Mammary epithelial cell (primary cell): ENCODE measurements at regions of chr14 and their contacts with region 1.

Region 1: GRCh38 chr14:71166180-71166790 is 259.0 kb downstream of the PCNX1 start:
- DNase-seq: peak; percentile 77
- H3K4me3 ChIP-seq: no peak overlapping the region
- H3K27ac ChIP-seq: no peak overlapping the region
- H3K4me1 ChIP-seq: peaks cover 8% of the 10 kb centered on the region
- H3K27me3 ChIP-seq: no peaks in the 10 kb centered on the region
- CTCF ChIP-seq: peak; percentile 50 to 76

Region 2: DNA sequence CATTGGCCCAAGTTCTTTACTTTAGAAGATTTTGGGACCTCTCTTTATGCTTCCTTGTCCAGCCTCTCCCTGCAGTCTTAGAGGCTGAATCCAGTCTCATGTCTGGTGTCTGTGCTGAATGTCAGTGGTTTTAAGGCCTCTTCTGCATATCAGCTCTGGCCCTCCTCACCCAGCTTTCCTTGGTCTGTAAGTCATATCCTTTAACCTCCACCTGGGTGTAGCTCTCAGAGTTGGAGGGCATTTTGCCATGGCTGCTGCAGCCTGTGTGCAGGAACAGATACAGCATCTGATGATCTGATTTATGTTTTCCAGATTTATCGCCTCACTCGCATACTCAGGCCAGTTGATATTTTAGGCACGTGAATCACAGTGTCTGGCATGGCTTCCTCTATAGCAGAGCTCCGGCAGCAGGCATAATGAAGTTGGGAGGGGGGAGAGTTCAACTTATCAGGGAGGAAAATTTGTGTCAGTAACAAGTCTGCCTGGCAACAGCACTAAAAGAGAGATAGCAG is 76.0 kb after region 1 on chr14:
- CTCF ChIA-PET with region 1: no interaction called
- dilution Hi-C with region 1: no loop called
- in situ Hi-C with region 1: no loop called
- intact Hi-C with region 1: loop called (anchors 5 kb)
- DNase-seq: no peak
- H3K4me3 ChIP-seq: no peak overlapping the region
- H3K27ac ChIP-seq: no peak overlapping the region
- H3K4me1 ChIP-seq: peaks cover 7% of the 10 kb centered on the region
- H3K27me3 ChIP-seq: no peaks in the 10 kb centered on the region
- CTCF ChIP-seq: no peak

Region 3: GRCh38 chr14:71261206-71261605 is 94.9 kb after region 1 on chr14:
- CTCF ChIA-PET with region 1: no interaction called
- dilution Hi-C with region 1: no loop called
- in situ Hi-C with region 1: no loop called
- intact Hi-C with region 1: no loop called
- DNase-seq: no peak
- H3K4me3 ChIP-seq: no peak overlapping the region
- H3K27ac ChIP-seq: no peak overlapping the region
- H3K4me1 ChIP-seq: no peaks in the 10 kb centered on the region
- H3K27me3 ChIP-seq: no peaks in the 10 kb centered on the region
- CTCF ChIP-seq: no peak

Region 4: GRCh38 chr14:71271166-71271945 is 105.1 kb after region 1 on chr14:
- CTCF ChIA-PET with region 1: no interaction called
- dilution Hi-C with region 1: loop called (anchors 5 kb)
- in situ Hi-C with region 1: no loop called
- intact Hi-C with region 1: no loop called
- DNase-seq: no peak
- H3K4me3 ChIP-seq: no peak overlapping the region
- H3K27ac ChIP-seq: no peak overlapping the region
- H3K4me1 ChIP-seq: peaks cover 5% of the 10 kb centered on the region
- H3K27me3 ChIP-seq: no peaks in the 10 kb centered on the region
- CTCF ChIP-seq: no peak

Region 5: DNA sequence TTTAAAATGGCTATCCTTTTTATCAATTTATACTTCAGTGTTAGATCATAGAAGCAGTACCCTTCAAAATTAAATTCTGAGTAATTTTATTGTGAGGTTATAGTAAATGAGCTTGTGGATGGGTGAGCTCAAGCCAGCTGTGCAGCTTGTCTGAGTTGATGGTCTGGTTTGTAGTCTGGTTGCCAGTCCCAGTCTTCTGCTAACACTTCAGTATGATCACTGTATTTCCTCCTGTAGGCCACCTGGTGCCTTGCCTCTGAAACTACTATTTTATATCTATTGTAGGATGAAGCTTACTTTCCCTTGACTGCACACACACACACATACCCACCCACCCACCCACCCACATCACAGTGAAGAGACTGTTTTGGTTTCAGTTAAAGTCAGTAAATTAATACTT is 237.4 kb after region 1 on chr14:
- CTCF ChIA-PET with region 1: no interaction called
- dilution Hi-C with region 1: no loop called
- in situ Hi-C with region 1: no loop called
- intact Hi-C with region 1: loop called (anchors 2 kb)
- DNase-seq: peak; percentile 23
- H3K4me3 ChIP-seq: no peak overlapping the region
- H3K27ac ChIP-seq: no peak overlapping the region
- H3K4me1 ChIP-seq: peaks cover 13% of the 10 kb centered on the region
- H3K27me3 ChIP-seq: no peaks in the 10 kb centered on the region
- CTCF ChIP-seq: peak in 1 of 2 donors; percentile 37

Region 6: DNA sequence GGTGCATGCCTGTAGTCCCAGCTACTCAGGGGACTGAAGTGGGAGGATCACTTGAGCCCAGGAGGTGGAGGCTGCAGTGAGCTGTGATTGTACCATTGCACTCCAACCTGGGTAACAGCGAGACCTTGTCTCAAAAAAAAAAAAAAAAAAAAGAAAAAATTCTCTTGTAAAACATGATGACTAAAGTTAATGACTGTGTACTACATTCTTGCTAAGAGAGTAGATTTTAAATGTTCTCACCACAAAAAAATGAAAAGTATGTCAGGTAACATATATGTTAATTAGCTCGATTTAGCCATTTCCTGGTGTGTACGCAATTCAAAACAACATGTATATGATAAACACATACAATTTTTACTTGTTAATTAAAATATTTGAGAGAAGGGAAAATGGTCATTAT is 285.2 kb after region 1 on chr14:
- CTCF ChIA-PET with region 1: interaction called, 20 read pairs
- dilution Hi-C with region 1: no loop called
- in situ Hi-C with region 1: no loop called
- intact Hi-C with region 1: no loop called
- DNase-seq: no peak
- H3K4me3 ChIP-seq: no peak overlapping the region
- H3K27ac ChIP-seq: no peak overlapping the region
- H3K4me1 ChIP-seq: peaks cover 14% of the 10 kb centered on the region
- H3K27me3 ChIP-seq: no peaks in the 10 kb centered on the region
- CTCF ChIP-seq: no peak